CD4-positive, alpha-beta memory T cell (primary cell): ENCODE measurements at regions of chr5 and their contacts with region 1.

Region 1: GRCh38 chr5:177006265-177006972 is at the start of gene UIMC1:
- DNase-seq: peak; percentile 89 to 91 (median 89)
- H3K4me3 ChIP-seq: peak within 1 kb of the TSS; percentile 57 to 62
- H3K4me3 Mint-ChIP-seq: peak within 1 kb of the TSS; percentile 93 to 96 (median 94)
- H3K27ac ChIP-seq: peak within 1 kb of the TSS; percentile 86
- H3K27ac Mint-ChIP-seq: peak within 1 kb of the TSS; percentile 91 to 97 (median 94)
- H3K4me1 ChIP-seq: peaks cover 23% of the 10 kb centered on the region
- H3K4me1 Mint-ChIP-seq: peaks cover 22 to 34% (median 28%) of the 10 kb centered on the region in 4 donors
- H3K27me3 ChIP-seq: no peaks in the 10 kb centered on the region
- H3K27me3 Mint-ChIP-seq: no peaks in the 10 kb centered on the region
- total RNA-seq, gene UIMC1: 57.1 to 61.7 TPM

Region 2: DNA sequence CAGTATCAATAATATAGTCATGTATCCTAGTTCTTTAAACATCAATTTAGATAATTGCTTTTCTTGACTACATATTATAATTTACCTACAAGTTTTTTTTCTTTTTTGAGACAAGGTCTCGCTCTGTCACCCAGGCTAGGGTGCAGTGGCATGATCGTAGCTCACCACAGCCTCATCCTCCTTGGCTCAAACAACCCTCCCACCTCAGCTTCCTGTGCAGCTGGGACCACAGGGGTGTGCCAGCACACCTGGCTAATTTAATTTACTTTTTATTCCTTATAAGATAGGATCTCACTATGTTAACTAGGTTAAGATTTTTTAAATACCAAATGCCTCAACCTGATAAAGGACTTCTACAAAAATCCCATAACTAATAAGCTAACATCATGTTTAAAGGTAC is 20.9 kb before region 1 on chr5:
- CTCF ChIA-PET with region 1: interaction called, 8 read pairs
- POLR2A ChIA-PET with region 1: interaction called, 22 read pairs
- intact Hi-C with region 1: no loop called
- DNase-seq: peak; percentile 40 to 67 (median 58)
- H3K4me3 ChIP-seq: no peak overlapping the region
- H3K4me3 Mint-ChIP-seq: peak overlapping the region in 7 of 8 donors; percentile 40 to 69 (median 53)
- H3K27ac ChIP-seq: no peak overlapping the region
- H3K27ac Mint-ChIP-seq: peak overlapping the region; percentile 75 to 93 (median 86)
- H3K4me1 ChIP-seq: peaks cover 36% of the 10 kb centered on the region
- H3K4me1 Mint-ChIP-seq: peaks cover 16 to 41% (median 27%) of the 10 kb centered on the region in 4 donors
- H3K27me3 ChIP-seq: no peaks in the 10 kb centered on the region
- H3K27me3 Mint-ChIP-seq: no peaks in the 10 kb centered on the region

Region 3: GRCh38 chr5:177022384-177023308 is 16.2 kb after region 1 on chr5 and contains the start of gene ZNF346:
- CTCF ChIA-PET with region 1: interaction called, 9 read pairs
- POLR2A ChIA-PET with region 1: interaction called, 51 read pairs
- intact Hi-C with region 1: loop called (anchors 1 kb)
- DNase-seq: peak; percentile 90 to 94 (median 92)
- H3K4me3 ChIP-seq: peak within 1 kb of the TSS; percentile 74 to 86
- H3K4me3 Mint-ChIP-seq: peak within 1 kb of the TSS; percentile 91 to 99 (median 98)
- H3K27ac ChIP-seq: peak within 1 kb of the TSS; percentile 91
- H3K27ac Mint-ChIP-seq: peak within 1 kb of the TSS; percentile 94 to 99 (median 98)
- H3K4me1 ChIP-seq: peaks cover 31% of the 10 kb centered on the region
- H3K4me1 Mint-ChIP-seq: peaks cover 27 to 45% (median 36%) of the 10 kb centered on the region in 4 donors
- H3K27me3 ChIP-seq: no peaks in the 10 kb centered on the region
- H3K27me3 Mint-ChIP-seq: no peaks in the 10 kb centered on the region
- total RNA-seq, gene ZNF346: 24.0 to 29.1 TPM

Region 4: DNA sequence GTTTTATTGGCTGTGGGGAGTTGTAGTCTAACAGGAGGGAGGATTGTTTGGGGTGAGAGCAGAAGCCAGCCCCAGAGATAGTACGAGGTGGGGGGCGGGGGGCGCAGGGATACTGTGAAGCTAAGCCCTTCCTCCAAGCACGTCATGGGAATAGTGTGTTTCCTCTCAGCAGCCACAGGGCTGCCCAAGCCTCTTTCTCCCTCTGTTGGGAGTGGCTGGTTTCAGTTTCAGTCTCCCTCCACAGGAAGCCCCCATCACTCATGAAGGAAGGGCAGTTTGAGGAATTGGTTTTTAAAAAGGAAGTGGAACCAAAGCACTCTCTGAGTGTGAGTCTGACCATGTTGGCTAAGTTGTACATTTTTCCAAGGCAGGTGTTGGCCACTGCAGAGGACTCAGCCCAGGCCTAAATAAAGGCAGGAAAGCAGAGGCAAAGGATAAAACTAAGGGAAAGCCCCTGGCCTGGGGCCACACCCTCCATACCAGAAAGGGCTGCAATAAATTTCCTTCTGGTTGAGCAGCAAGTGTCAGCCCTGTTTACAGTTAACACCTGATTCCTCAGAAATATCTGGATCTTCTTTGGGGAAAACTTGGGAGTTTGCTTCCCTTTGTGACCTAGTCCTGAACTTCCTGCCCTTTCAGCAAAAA is 293.9 kb after region 1 on chr5:
- CTCF ChIA-PET with region 1: no interaction called
- POLR2A ChIA-PET with region 1: no interaction called
- intact Hi-C with region 1: no loop called
- DNase-seq: peak; percentile 55 to 87 (median 60)
- H3K4me3 ChIP-seq: no peak overlapping the region
- H3K4me3 Mint-ChIP-seq: peak overlapping the region; percentile 65 to 97 (median 77)
- H3K27ac ChIP-seq: peak overlapping the region; percentile 51
- H3K27ac Mint-ChIP-seq: peak overlapping the region; percentile 89 to 98 (median 97)
- H3K4me1 ChIP-seq: peaks cover 64% of the 10 kb centered on the region
- H3K4me1 Mint-ChIP-seq: peaks cover 53 to 84% (median 71%) of the 10 kb centered on the region in 4 donors
- H3K27me3 ChIP-seq: no peaks in the 10 kb centered on the region
- H3K27me3 Mint-ChIP-seq: no peaks in the 10 kb centered on the region